Mammary epithelial cell (primary cell): ENCODE measurements at regions of chr15 and their contacts with region 1.

Region 1: DNA sequence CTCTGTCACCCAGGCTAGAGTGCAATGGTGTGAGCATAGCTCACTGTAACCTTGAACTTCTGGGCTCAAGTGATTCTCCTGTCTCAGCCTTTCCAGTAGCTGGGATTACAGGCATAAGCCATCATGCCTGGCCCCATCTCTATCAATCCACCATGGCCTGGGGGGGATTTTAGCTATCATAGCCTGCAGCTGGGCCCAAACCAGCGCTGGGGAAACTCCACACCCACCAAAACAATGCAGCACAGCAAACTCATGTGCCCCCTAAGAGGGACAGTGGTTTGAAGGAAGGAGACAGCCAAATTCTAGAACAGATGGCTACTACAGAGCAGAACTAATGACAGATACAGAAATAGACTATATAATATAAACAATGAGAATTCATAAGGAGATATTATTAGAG is 13.8 kb upstream of the NSMCE3 start:
- DNase-seq: no peak
- H3K4me3 ChIP-seq: no peak overlapping the region
- H3K27ac ChIP-seq: no peak overlapping the region
- H3K4me1 ChIP-seq: no peaks in the 10 kb centered on the region
- H3K27me3 ChIP-seq: no peaks in the 10 kb centered on the region
- CTCF ChIP-seq: no peak

Region 2: DNA sequence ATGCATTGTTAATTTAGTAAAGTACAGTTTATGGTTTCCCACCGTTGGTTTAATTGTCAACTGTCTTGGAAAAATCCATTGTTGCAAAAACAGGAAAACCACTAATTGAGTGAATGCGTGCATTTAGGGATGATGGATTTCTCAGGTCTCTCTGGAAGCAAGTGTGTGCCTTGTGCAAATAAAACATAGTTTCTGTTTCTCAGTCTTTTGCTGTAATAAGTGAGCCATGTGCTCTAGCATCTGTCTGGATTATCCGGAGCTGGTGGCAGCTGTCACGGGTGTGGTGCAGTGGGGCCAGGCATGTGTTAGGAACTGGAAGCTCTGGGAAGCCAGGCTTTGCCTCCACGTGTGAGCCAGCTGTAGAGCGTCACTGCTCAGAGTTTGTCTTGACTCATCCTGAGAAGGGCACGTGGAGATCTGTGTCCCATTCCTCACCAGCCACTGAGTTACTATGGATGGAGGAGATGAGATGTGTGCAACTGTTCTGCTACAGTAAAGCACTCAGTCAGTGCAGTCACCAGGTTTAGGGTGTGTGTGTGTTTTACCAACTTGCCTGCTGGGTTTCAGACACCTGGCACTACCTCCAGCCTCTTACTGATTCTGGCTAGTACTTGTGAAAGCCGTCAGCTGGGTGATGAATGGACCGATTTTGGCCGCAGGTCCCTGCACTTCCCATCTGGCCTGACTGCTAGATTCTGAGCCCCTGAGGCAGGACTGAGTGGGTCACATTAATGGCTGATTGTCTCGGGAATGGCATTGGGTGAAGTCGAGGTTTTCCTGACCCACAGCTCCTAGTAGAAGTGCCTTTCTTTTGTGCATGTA is 390.4 kb before region 1 on chr15:
- CTCF ChIA-PET with region 1: no interaction called
- dilution Hi-C with region 1: no loop called
- in situ Hi-C with region 1: no loop called
- intact Hi-C with region 1: no loop called
- DNase-seq: no peak
- H3K4me3 ChIP-seq: no peak overlapping the region
- H3K27ac ChIP-seq: no peak overlapping the region
- H3K4me1 ChIP-seq: no peaks in the 10 kb centered on the region
- H3K27me3 ChIP-seq: no peaks in the 10 kb centered on the region
- CTCF ChIP-seq: no peak

Region 3: DNA sequence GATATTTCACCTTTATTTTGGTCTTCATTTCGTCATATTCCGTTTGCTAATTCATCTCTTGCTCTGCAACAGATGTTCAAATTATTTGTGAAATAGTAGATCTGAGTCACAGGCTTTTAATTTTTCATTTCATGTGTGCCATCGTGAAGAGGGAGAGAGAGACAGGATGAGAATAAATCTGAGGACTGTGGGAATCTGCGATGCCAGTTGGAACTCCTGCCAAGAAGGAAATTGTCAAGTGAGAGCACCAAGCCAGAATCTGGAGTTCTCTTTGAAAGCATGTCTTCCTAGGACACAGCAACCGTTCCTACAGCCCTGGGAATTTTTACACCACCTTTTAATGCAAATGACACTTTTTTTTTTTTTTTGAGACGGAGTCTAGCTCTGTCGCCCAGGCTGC is 62.5 kb before region 1 on chr15:
- CTCF ChIA-PET with region 1: no interaction called
- dilution Hi-C with region 1: loop called (anchors 5 kb)
- in situ Hi-C with region 1: no loop called
- intact Hi-C with region 1: no loop called
- DNase-seq: no peak
- H3K4me3 ChIP-seq: no peak overlapping the region
- H3K27ac ChIP-seq: no peak overlapping the region
- H3K4me1 ChIP-seq: no peaks in the 10 kb centered on the region
- H3K27me3 ChIP-seq: no peaks in the 10 kb centered on the region
- CTCF ChIP-seq: no peak

Region 4: GRCh38 chr15:29242456-29243242 is 40.7 kb before region 1 on chr15:
- CTCF ChIA-PET with region 1: no interaction called
- dilution Hi-C with region 1: no loop called
- in situ Hi-C with region 1: no loop called
- intact Hi-C with region 1: no loop called
- DNase-seq: no peak
- H3K4me3 ChIP-seq: no peak overlapping the region
- H3K27ac ChIP-seq: no peak overlapping the region
- H3K4me1 ChIP-seq: no peaks in the 10 kb centered on the region
- H3K27me3 ChIP-seq: no peaks in the 10 kb centered on the region
- CTCF ChIP-seq: no peak